ENCODE measurements at regions of chr12 and their contacts with region 1.

Region 1: GRCh38 chr12:21501379-21501956 is at the starts of genes GOLT1B and RECQL:
- DNase-seq: peak; percentile 98
- H3K4me3 ChIP-seq: peak within 1 kb of the TSS; percentile 70
- H3K4me3 Mint-ChIP-seq: no peak within 1 kb of the TSS
- H3K27ac Mint-ChIP-seq: no peak within 1 kb of the TSS
- H3K4me1 ChIP-seq: no peaks in the 10 kb centered on the region; the same call in 1 of the 2 replicates
- H3K4me1 Mint-ChIP-seq: peaks cover 9% of the 10 kb centered on the region
- H3K27me3 ChIP-seq: no peaks in the 10 kb centered on the region
- H3K27me3 Mint-ChIP-seq: no peaks in the 10 kb centered on the region
- CTCF ChIP-seq: no peak
- total RNA-seq, gene GOLT1B: 75.9 and 81.7 TPM in 2 replicates
- total RNA-seq, gene RECQL: 50.7 and 55.3 TPM in 2 replicates

Region 2: GRCh38 chr12:21416511-21417121 is 84.9 kb before region 1 on chr12:
- CTCF ChIA-PET with region 1: no interaction called
- POLR2A ChIA-PET with region 1: no interaction called
- intact Hi-C with region 1: no loop called
- DNase-seq: no peak
- H3K4me3 ChIP-seq: no peak overlapping the region
- H3K4me3 Mint-ChIP-seq: peak overlapping the region; percentile 13
- H3K27ac Mint-ChIP-seq: peak overlapping the region; percentile 15
- H3K4me1 ChIP-seq: peaks cover 20% of the 10 kb centered on the region
- H3K4me1 Mint-ChIP-seq: peaks cover 18% of the 10 kb centered on the region
- H3K27me3 ChIP-seq: no peaks in the 10 kb centered on the region
- H3K27me3 Mint-ChIP-seq: no peaks in the 10 kb centered on the region
- CTCF ChIP-seq: no peak

Region 3: DNA sequence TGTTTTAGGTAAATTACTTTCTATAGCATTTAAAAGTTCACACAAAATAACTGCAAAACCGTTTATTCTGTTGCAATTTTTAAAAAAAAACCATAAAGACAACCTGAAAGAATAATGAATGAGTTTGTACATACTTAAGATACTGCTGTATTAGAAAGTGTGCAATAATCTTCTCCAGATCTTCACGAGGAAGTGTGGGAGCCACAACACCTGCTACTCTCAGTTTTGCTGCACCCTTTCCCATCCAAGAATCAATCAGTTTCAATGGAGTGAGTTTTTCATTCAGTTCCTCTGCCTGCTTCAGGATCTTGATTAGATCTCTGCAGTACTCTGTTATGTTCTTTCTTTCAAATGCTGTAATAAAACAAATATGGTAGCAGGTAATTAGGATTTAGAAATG is 30.2 kb before region 1 on chr12:
- CTCF ChIA-PET with region 1: no interaction called
- POLR2A ChIA-PET with region 1: no interaction called
- intact Hi-C with region 1: no loop called
- DNase-seq: no peak
- H3K4me3 ChIP-seq: no peak overlapping the region
- H3K4me3 Mint-ChIP-seq: no peak overlapping the region
- H3K27ac Mint-ChIP-seq: no peak overlapping the region
- H3K4me1 ChIP-seq: no peaks in the 10 kb centered on the region; the same call in 1 of the 2 replicates
- H3K4me1 Mint-ChIP-seq: no peaks in the 10 kb centered on the region
- H3K27me3 ChIP-seq: no peaks in the 10 kb centered on the region
- H3K27me3 Mint-ChIP-seq: no peaks in the 10 kb centered on the region
- CTCF ChIP-seq: no peak

Region 4: GRCh38 chr12:21551841-21552465 is 50.5 kb after region 1 on chr12:
- CTCF ChIA-PET with region 1: no interaction called
- POLR2A ChIA-PET with region 1: no interaction called
- intact Hi-C with region 1: no loop called
- DNase-seq: no peak
- H3K4me3 ChIP-seq: no peak overlapping the region
- H3K4me3 Mint-ChIP-seq: no peak overlapping the region
- H3K27ac Mint-ChIP-seq: no peak overlapping the region
- H3K4me1 ChIP-seq: peaks cover 14% of the 10 kb centered on the region
- H3K4me1 Mint-ChIP-seq: peaks cover 17% of the 10 kb centered on the region
- H3K27me3 ChIP-seq: no peaks in the 10 kb centered on the region
- H3K27me3 Mint-ChIP-seq: no peaks in the 10 kb centered on the region
- CTCF ChIP-seq: no peak

Region 5: GRCh38 chr12:21580748-21581516 is 79.5 kb after region 1 on chr12:
- CTCF ChIA-PET with region 1: no interaction called
- POLR2A ChIA-PET with region 1: no interaction called
- intact Hi-C with region 1: loop called (anchors 1 kb)
- DNase-seq: no peak
- H3K4me3 ChIP-seq: no peak overlapping the region
- H3K4me3 Mint-ChIP-seq: no peak overlapping the region
- H3K27ac Mint-ChIP-seq: peak overlapping the region; percentile 0
- H3K4me1 ChIP-seq: peaks cover 62% of the 10 kb centered on the region
- H3K4me1 Mint-ChIP-seq: peaks cover 57% of the 10 kb centered on the region
- H3K27me3 ChIP-seq: no peaks in the 10 kb centered on the region
- H3K27me3 Mint-ChIP-seq: no peaks in the 10 kb centered on the region
- CTCF ChIP-seq: no peak

Region 6: DNA sequence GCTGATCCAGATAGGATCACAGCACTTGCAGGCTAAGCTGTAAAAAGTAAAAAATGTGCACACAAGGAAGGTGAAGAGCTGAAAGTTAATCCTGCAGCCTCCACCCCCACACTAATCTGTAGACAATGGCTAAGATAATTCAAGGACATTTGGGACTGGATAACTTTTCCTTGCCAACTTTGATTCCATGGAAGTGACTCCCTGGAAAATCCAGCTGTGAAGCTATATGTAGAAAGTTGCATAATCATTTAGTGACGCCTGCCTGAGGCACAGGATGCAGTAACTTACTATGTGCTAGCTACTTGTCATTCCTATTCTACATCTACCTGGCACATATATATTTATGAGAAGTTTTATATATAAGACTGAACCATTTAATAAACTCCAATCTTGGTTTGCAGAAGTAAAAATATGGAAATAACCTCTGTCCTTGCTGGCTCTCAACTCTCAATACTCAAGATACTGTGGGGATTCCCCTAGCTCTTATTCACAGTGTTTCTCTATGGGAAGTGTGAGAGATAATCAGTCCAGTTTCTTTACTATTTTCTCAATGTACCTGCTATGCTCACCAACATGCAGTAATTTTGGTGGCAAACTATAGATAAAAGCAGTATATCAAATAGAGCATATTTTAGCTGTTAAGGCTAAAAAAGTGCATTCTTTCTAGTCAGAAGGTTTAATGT is 141.4 kb after region 1 on chr12:
- CTCF ChIA-PET with region 1: no interaction called
- POLR2A ChIA-PET with region 1: interaction called, 4 read pairs
- intact Hi-C with region 1: loop called (anchors 5 kb)
- DNase-seq: no peak
- H3K4me3 ChIP-seq: no peak overlapping the region
- H3K4me3 Mint-ChIP-seq: no peak overlapping the region
- H3K27ac Mint-ChIP-seq: no peak overlapping the region
- H3K4me1 ChIP-seq: peaks cover 86% of the 10 kb centered on the region
- H3K4me1 Mint-ChIP-seq: peaks cover 76% of the 10 kb centered on the region
- H3K27me3 ChIP-seq: no peaks in the 10 kb centered on the region
- H3K27me3 Mint-ChIP-seq: no peaks in the 10 kb centered on the region
- CTCF ChIP-seq: no peak

Region 7: GRCh38 chr12:21657326-21658077 is 156.0 kb after region 1 on chr12 and contains the start of gene LDHB:
- CTCF ChIA-PET with region 1: no interaction called
- POLR2A ChIA-PET with region 1: interaction called, 6 read pairs
- intact Hi-C with region 1: loop called (anchors 1 kb)
- DNase-seq: peak; percentile 99
- H3K4me3 ChIP-seq: peak within 1 kb of the TSS; percentile 78
- H3K4me3 Mint-ChIP-seq: peak within 1 kb of the TSS; percentile 85
- H3K27ac Mint-ChIP-seq: peak within 1 kb of the TSS; percentile 96
- H3K4me1 ChIP-seq: peaks cover 38% of the 10 kb centered on the region
- H3K4me1 Mint-ChIP-seq: peaks cover 32% of the 10 kb centered on the region
- H3K27me3 ChIP-seq: no peaks in the 10 kb centered on the region
- H3K27me3 Mint-ChIP-seq: no peaks in the 10 kb centered on the region
- CTCF ChIP-seq: no peak
- total RNA-seq, gene LDHB: 1,752 and 1,948 TPM in 2 replicates

Measured in Caco-2 (cell line).